ENCODE measurements at regions of chr7 and their contacts with region 1.

Region 1: GRCh38 chr7:105055621-105056020 is 41.6 kb downstream of the KMT2E start:
- DNase-seq: no peak
- ATAC-seq: no peak

Region 2: DNA sequence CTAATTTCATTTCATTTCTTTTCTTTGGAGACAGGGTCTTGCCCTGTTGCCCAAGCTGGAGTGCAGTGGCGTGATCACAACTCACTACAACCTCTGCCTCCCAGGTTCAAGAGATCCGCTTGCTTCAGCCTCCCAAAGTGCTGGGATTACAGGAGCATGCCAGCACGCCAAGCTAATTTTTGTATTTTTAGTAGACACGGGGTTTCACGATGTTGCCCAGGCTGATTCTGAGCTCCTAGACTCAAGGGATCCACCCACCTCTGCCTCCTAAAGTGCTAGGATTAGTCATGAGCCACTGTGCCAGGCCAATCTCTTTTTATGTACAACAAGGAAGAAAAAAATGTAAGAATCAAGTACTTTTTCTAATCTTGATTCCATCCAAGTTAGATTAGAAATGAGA is 52.3 kb before region 1 on chr7:
- intact Hi-C with region 1: loop called (anchors 10 kb)
- DNase-seq: peak; percentile 39
- ATAC-seq: peak; percentile 62

Measured in Right ventricle myocardium superior (tissue), 1 donor.